ENCODE measurements at regions of chr5 and their contacts with region 1.

Region 1: DNA sequence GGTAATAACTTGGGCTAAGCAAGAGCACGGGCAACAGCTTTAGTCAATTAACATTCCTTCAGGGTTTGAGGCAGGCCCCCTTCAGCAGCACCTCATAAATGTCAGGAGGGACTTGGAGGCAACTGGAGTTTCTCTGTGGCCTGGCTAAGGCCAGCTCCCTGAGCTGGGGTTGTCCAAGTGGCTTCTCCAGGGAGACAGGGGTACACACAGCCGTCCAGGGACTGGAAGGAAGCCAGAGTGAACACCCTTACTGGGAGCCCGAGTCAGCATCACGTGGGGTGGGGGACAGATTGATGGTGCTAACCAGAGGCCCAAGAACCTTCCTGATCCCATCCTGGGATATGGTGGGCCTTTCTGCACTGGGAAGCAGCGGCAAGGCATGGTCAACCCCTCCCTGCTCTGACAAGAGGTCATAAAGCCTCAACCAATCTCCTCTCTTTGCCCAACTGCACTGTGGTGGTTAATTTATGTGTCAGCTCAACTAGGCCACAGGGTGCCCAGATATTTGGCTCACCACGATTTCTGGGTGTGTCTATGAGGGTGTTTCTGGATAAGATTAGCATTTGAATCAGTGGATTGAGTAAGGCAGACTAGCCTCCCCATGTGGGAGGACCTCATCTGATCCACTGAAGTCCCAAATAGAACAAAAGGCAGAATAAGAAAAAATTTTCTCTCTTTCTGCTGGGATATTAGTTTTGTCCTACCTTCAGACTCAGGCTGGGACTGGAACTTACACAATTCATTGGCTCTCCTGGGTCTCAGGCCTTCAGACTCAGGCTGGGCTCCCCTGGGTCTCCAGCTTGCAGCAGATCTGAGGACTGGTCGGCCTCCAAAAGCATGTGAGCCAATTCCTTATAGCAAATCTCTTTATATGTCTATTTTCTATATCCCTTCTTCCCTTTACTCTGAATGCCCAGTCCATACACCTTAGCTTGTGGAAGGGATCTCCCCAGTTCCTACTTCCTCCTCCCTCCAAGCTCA is 127.2 kb upstream of the LARP1 start:
- DNase-seq: no peak
- ATAC-seq: peak; percentile 24

Region 2: DNA sequence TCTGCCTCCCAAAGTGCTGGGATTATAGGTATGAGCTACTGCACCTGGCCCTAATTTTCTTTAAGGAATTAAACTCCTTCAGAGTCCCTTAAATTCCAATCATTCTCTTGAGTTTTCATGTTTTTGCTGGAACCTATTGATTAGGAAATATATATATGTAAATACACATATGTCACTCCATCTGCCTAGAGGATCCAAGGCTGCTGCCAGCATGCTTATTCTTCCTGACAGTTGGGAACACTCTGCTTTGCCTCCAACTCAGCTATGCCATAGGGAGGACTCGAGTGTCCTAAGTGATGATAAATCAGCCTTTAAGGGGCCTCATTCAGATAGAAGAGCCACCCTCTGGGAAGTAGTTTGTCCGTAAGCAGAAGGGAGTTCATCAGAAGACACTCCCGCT is 567.4 kb before region 1 on chr5:
- intact Hi-C with region 1: loop called (anchors 2 kb)
- DNase-seq: no peak
- ATAC-seq: no peak

Measured in sciatic nerve (tissue), 2 donors.